Activated naive CD4-positive, alpha-beta T cell treated with anti-CD3 and anti-CD28 coated beads for 36 hours (primary cell): ENCODE measurements at regions of chr9 and their contacts with region 1.

Region 1: DNA sequence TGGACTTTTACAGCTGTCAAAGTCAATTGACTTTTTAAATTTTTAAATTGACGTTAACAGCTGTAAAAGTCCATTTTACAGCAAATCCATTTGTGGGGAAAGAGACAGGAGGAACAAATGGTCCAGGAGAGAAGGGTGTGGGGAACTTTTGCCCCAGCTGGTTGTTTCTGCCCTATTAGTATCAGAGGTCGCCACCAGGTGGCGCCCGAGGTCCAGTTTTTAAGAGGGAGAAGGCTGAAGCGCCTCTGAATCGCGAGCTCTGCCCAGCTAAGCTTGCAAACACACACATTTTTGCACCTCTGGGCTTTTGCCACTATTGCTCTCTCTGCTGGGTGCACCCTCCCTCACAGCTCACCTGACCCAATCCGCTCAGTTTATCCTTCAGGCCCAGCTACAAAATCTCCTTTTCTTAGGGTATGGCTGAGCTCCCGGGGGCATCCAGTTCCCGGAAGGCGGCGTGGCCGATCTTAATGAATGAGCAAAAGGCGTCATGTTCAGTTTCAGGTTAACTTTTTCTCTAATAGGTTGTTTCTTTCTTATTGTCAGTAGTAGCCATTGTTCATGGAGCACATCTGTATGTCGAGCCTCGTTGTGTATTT is 6.3 kb upstream of the TTLL11 start:
- DNase-seq: peak; percentile 85
- H3K4me3 Mint-ChIP-seq: peak overlapping the region; percentile 41
- H3K27ac Mint-ChIP-seq: no peak overlapping the region
- H3K4me1 Mint-ChIP-seq: peaks cover 9% of the 10 kb centered on the region
- H3K27me3 Mint-ChIP-seq: peaks cover 4% of the 10 kb centered on the region

Region 2: DNA sequence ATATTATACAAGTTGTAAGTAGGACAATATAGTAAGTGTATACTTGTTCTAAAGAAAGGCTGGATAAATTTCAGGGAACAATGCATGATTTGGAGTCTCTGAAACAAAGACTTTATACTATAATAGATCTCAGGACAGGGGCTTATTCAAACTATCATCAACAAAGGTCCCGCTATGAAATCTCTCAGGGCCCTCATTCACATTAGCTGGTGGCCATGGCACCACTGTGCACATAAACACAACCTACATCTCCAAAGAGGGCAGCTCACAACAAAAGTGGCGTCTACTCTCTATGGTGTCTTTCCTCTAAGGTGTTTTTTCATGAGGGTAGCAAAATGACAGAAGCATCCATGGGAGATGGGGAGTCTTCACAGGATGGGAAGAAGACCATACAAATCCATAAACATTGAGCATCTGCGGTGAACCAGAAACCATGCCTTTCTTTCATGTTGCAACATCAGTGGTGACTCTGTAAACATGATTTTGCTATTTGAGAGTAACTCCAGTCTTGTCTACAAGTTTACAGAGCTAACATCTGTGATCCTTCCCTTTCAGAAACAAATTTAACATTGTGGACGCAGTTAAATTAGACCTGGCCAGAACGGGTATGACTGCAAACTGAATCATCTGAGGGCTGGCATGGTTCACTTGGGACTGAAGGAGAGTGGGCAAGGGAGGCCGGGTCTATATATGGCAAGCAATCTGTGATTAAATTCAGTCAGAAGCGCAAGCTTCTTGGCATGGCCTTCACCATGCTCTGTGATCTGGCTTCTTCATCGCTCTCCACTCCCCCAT is 11.8 kb before region 1 on chr9:
- CTCF ChIA-PET with region 1: interaction called, 14 read pairs
- intact Hi-C with region 1: no loop called
- DNase-seq: no peak
- H3K4me3 Mint-ChIP-seq: no peak overlapping the region
- H3K27ac Mint-ChIP-seq: no peak overlapping the region
- H3K4me1 Mint-ChIP-seq: peaks cover 27% of the 10 kb centered on the region
- H3K27me3 Mint-ChIP-seq: no peaks in the 10 kb centered on the region

Region 3: DNA sequence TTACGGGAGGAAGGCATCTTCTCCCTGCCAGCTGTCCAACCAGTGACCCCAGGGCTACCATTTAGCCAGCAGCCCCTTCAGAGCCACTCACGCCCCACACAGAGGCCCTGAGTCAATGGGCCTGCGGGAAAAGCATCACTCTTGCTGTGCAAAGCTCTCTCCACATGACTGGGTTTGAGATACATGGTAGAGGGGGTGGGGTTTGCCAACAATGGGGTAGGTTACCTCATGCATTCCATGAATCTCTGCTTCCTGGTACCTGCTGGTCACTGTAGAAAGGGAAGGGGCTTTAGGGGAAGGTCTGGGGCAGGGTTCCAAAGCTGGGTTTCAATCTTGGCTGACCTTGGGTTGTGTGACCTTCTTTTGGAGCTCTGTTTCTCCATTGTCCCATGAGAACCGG is 16.7 kb after region 1 on chr9:
- CTCF ChIA-PET with region 1: interaction called, 188 read pairs
- intact Hi-C with region 1: no loop called
- DNase-seq: no peak
- H3K4me3 Mint-ChIP-seq: no peak overlapping the region
- H3K27ac Mint-ChIP-seq: no peak overlapping the region
- H3K4me1 Mint-ChIP-seq: no peaks in the 10 kb centered on the region
- H3K27me3 Mint-ChIP-seq: no peaks in the 10 kb centered on the region

Region 4: GRCh38 chr9:122350638-122351355 is 251.4 kb after region 1 on chr9:
- CTCF ChIA-PET with region 1: interaction called, 82 read pairs
- intact Hi-C with region 1: loop called (anchors 1 kb)
- DNase-seq: peak; percentile 82
- H3K4me3 Mint-ChIP-seq: no peak overlapping the region
- H3K27ac Mint-ChIP-seq: no peak overlapping the region
- H3K4me1 Mint-ChIP-seq: peaks cover 2% of the 10 kb centered on the region
- H3K27me3 Mint-ChIP-seq: peaks cover 29% of the 10 kb centered on the region

Region 5: GRCh38 chr9:122453677-122454135 is 354.3 kb after region 1 on chr9:
- CTCF ChIA-PET with region 1: interaction called, 3 read pairs
- intact Hi-C with region 1: loop called (anchors 5 kb)
- DNase-seq: no peak
- H3K4me3 Mint-ChIP-seq: no peak overlapping the region
- H3K27ac Mint-ChIP-seq: no peak overlapping the region
- H3K4me1 Mint-ChIP-seq: no peaks in the 10 kb centered on the region
- H3K27me3 Mint-ChIP-seq: peaks cover 11% of the 10 kb centered on the region